ENCODE measurements at regions of chr4 and their contacts with region 1.

Region 1: DNA sequence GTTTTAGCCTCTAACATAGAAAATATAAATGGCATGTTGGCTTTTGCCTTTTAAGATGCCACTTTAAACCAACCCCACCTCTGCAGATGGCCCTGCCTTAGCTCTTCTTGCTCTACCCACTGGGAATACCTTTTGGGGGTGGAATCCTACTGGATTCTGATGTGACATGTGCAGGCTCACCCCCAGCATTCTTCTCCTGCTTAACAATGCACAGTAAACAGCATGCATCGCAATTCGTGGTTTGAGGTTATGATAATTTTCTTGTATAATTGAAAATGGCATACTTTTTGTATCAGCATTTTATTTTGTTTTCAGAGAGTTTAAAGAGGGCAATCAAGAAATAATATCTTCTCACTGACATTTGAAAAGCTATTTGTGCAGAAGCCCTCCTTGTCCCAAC is 167.9 kb downstream of the AREG start:
- DNase-seq: no peak
- ATAC-seq: no peak
- H3K4me3 Mint-ChIP-seq: no peak overlapping the region
- H3K27ac Mint-ChIP-seq: no peak overlapping the region
- H3K4me1 Mint-ChIP-seq: no peaks in the 10 kb centered on the region
- H3K27me3 Mint-ChIP-seq: peaks cover 2% of the 10 kb centered on the region

Region 2: GRCh38 chr4:74583077-74583693 is 29.7 kb before region 1 on chr4:
- CTCF ChIA-PET with region 1: interaction called, 3 read pairs
- POLR2A ChIA-PET with region 1: interaction called, 12 read pairs
- intact Hi-C with region 1: no loop called
- DNase-seq: no peak
- ATAC-seq: no peak
- H3K4me3 Mint-ChIP-seq: no peak overlapping the region
- H3K27ac Mint-ChIP-seq: no peak overlapping the region
- H3K4me1 Mint-ChIP-seq: no peaks in the 10 kb centered on the region
- H3K27me3 Mint-ChIP-seq: peaks cover 3% of the 10 kb centered on the region

Region 3: GRCh38 chr4:75565481-75565880 is 952.6 kb after region 1 on chr4:
- CTCF ChIA-PET with region 1: no interaction called
- POLR2A ChIA-PET with region 1: no interaction called
- intact Hi-C with region 1: no loop called
- DNase-seq: no peak
- ATAC-seq: no peak
- H3K4me3 Mint-ChIP-seq: no peak overlapping the region
- H3K27ac Mint-ChIP-seq: no peak overlapping the region
- H3K4me1 Mint-ChIP-seq: no peaks in the 10 kb centered on the region
- H3K27me3 Mint-ChIP-seq: peaks cover 2% of the 10 kb centered on the region

Measured in activated CD4-positive, alpha-beta T cell treated with anti-CD3 and anti-CD28 coated beads for 36 hours (primary cell).